ENCODE measurements at regions of chr12 and their contacts with region 1.

Region 1: DNA sequence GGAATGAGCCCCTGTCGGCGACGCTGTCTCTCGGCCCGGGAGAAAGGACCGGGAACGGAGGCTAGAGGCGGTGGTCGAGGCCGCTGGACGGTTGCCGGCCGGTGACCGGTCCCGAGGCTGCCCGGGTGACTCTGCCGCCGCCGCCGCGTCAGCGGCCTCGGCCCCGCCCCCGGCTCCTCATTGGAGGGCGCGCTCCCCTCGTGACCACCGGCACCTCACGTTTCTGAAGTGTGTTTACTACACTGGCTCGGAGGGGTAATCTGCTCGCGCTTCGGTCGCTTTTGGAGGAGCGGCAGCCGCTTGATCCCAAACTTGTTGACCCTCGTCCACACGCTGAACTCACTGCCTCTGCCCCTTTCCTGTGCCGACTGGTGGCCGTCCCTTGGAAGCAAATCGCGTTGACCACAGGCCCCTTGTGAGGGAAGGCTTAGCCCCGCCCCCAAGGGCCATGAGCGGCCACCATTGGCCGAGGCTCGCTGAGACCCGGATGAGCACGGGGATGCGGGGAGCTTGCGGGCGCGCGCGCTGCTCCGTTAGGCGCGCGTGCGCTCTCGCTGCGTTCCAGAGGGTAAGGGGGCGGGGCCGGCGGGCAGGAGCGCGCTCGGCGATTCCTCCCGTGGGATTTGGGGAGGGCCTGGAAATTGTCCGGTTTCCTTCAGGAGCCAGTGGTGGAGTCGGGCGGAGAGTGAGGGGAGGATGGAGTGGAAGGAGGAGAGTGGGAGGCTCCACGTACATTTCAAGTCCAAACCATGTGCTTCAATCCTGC is at the start of gene CRY1:
- DNase-seq: peak; percentile 95 to 98 (median 97)
- H3K4me3 ChIP-seq: peak within 1 kb of the TSS; percentile 71 to 92 (median 89)
- H3K27ac ChIP-seq: peak within 1 kb of the TSS; percentile 94 to 97 (median 95)
- H3K4me1 ChIP-seq: peaks cover 10 to 20% of the 10 kb centered on the region in 2 donors
- H3K27me3 ChIP-seq: no peaks in the 10 kb centered on the region
- CTCF ChIP-seq: peak in 1 of 6 experiments; percentile 10
- POLR2A ChIP-seq: peak; percentile 95 to 96
- total RNA-seq, gene CRY1: 8.2 to 51.5 (median 14.8) TPM

Region 2: DNA sequence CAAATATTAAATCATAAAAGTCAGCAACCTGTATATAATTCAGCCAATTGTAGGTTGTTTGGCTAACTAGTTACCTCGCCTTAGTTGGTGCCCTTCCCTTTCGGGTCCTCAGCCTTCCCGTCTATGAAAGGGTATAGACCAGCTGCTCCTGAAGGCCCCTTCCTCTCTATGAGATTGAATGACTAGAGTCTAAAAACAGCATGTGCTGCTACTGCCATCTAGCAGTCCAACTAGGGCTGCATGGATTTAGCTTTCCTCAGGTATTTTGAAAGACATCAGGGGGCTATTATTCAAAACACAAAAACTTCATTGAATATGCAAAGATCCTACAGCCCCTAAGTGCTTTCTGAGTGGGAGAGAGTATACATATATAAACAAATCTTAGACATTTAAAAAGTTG is 174.9 kb before region 1 on chr12:
- intact Hi-C with region 1: no loop called
- DNase-seq: no peak
- H3K4me3 ChIP-seq: no peak overlapping the region
- H3K27ac ChIP-seq: no peak overlapping the region
- H3K4me1 ChIP-seq: no peaks in the 10 kb centered on the region
- H3K27me3 ChIP-seq: no peaks in the 10 kb centered on the region
- CTCF ChIP-seq: peak in 5 of 6 experiments; percentile 15 to 45 (median 31)
- POLR2A ChIP-seq: no peak

Region 3: DNA sequence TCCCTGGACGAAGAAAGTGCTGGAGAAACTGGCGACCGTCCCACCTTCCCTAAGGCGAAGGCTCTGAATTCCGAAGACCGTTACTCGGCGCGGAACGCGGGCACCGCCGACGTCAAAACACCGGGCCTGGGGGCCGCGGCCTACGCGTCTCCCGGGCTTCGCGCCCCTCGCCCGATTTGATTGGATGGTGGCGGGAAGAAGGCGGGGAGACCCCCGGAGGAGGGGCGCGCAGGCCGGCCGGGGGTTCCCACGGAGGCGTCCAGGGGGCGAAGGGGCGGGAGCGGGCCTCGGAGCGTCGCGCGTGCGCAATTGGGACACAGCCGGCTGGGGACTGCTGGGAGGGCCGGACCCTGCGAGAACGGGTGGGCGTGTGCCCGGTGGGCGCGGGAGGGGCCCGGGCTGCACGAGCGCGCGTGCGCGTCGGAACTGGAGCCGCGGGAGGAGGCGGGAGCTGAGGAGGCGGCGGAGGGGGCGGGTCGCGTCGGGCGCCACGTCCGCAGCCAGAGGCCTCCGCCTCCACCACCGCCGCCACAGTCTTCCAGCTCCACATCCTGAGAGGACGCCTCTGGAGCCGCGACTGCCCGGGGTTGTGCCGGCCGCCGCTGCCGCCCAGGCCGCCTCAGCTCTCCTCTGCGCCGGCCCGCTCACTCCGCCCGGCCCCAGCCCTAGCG is 138.1 kb before region 1 on chr12 and contains the start of gene TMEM263:
- intact Hi-C with region 1: loop called in 1 of 2 experiments (anchors 10 kb)
- DNase-seq: peak; percentile 92 to 96 (median 94)
- H3K4me3 ChIP-seq: peak within 1 kb of the TSS; percentile 73 to 97 (median 84)
- H3K27ac ChIP-seq: peak within 1 kb of the TSS; percentile 55 to 98 (median 96)
- H3K4me1 ChIP-seq: peaks cover 3 to 33% of the 10 kb centered on the region in 2 donors
- H3K27me3 ChIP-seq: no peaks in the 10 kb centered on the region
- CTCF ChIP-seq: peak in 2 of 6 experiments; percentile 8 to 15
- POLR2A ChIP-seq: peak; percentile 96 to 97
- total RNA-seq, gene TMEM263: 32.1 to 64.7 (median 45.6) TPM

Measured in adrenal gland (tissue), 19 donors.